Breast epithelium (tissue), 4 donors: ENCODE measurements at regions of chr5 and their contacts with region 1.

Region 1: GRCh38 chr5:75006865-75007822 is 45.2 kb downstream of the GCNT4 start:
- DNase-seq: no peak
- H3K4me3 ChIP-seq: no peak overlapping the region
- H3K27ac ChIP-seq: no peak overlapping the region
- H3K4me1 ChIP-seq: no peaks in the 10 kb centered on the region
- H3K27me3 ChIP-seq: no peaks in the 10 kb centered on the region
- CTCF ChIP-seq: no peak
- POLR2A ChIP-seq: no peak

Region 2: GRCh38 chr5:74833537-74834266 is 173.4 kb before region 1 on chr5:
- intact Hi-C with region 1: no loop called
- DNase-seq: peak in 1 of 2 donors; percentile 24
- H3K4me3 ChIP-seq: no peak overlapping the region
- H3K27ac ChIP-seq: no peak overlapping the region
- H3K4me1 ChIP-seq: no peaks in the 10 kb centered on the region
- H3K27me3 ChIP-seq: no peaks in the 10 kb centered on the region
- CTCF ChIP-seq: no peak
- POLR2A ChIP-seq: no peak

Region 3: GRCh38 chr5:74995926-74996325 is 11.2 kb before region 1 on chr5:
- intact Hi-C with region 1: loop called (anchors 1 kb)
- DNase-seq: no peak
- H3K4me3 ChIP-seq: no peak overlapping the region
- H3K27ac ChIP-seq: no peak overlapping the region
- H3K4me1 ChIP-seq: no peaks in the 10 kb centered on the region
- H3K27me3 ChIP-seq: no peaks in the 10 kb centered on the region
- CTCF ChIP-seq: no peak
- POLR2A ChIP-seq: no peak